HCT116 (cell line): ENCODE measurements at regions of chr22 and their contacts with region 1.

Region 1: DNA sequence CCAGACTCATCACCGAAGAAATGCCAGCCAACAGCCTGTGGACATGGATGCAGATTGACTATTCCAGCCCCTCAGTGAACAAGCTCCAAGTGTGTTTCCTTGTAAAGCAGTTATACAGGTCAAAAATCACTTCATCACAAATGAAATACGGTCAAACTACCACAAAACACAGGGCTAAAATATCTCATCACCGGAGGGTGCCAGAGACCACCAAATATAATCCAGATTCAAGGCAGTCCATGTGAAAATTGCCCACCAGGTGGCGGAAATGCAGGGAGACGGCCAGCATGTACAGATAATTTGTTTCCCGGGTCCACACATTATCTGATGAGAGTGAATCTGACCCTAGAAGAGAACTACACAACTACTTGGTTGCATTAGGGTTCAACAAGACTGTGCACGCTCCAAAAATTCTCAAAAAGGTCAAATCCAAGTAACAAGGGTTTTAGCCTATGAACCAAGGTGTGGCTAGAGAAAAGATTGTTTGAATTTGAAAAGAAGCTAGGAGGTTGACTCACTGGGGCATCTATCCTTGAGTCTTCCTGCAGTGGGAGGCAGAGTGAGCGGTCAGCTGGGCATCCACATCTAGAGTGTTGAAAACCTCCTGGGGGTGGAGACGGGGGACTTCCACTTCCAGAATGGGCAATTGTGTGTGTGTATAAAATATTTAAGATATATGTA is 71.7 kb downstream of the IGLL5 start:
- DNase-seq: peak; percentile 80
- ATAC-seq: peak; percentile 73
- H3K4me3 ChIP-seq: no peak overlapping the region
- H3K27ac ChIP-seq: no peak overlapping the region
- H3K4me1 ChIP-seq: no peaks in the 10 kb centered on the region
- H3K27me3 ChIP-seq: no peaks in the 10 kb centered on the region
- CTCF ChIP-seq: peak; percentile 85 to 100 (median 99)
- POLR2A ChIP-seq: no peak
- RAD21 ChIP-seq: peak; percentile 98

Region 2: GRCh38 chr22:22463855-22464540 is 495.3 kb before region 1 on chr22:
- CTCF ChIA-PET with region 1: interaction called, 20 read pairs
- POLR2A ChIA-PET with region 1: no interaction called
- RAD21 ChIA-PET with region 1: no interaction called
- intact Hi-C with region 1: loop called (anchors 1 kb)
- DNase-seq: peak; percentile 51
- ATAC-seq: peak; percentile 92
- H3K4me3 ChIP-seq: peak overlapping the region in 1 of 2 experiments; percentile 8; a peak in 1 of 4 replicates
- H3K27ac ChIP-seq: no peak overlapping the region
- H3K4me1 ChIP-seq: no peaks in the 10 kb centered on the region
- H3K27me3 ChIP-seq: no peaks in the 10 kb centered on the region
- CTCF ChIP-seq: peak; percentile 53 to 81 (median 59); a peak in 4 of 6 replicates
- POLR2A ChIP-seq: no peak
- RAD21 ChIP-seq: peak; percentile 78

Region 3: DNA sequence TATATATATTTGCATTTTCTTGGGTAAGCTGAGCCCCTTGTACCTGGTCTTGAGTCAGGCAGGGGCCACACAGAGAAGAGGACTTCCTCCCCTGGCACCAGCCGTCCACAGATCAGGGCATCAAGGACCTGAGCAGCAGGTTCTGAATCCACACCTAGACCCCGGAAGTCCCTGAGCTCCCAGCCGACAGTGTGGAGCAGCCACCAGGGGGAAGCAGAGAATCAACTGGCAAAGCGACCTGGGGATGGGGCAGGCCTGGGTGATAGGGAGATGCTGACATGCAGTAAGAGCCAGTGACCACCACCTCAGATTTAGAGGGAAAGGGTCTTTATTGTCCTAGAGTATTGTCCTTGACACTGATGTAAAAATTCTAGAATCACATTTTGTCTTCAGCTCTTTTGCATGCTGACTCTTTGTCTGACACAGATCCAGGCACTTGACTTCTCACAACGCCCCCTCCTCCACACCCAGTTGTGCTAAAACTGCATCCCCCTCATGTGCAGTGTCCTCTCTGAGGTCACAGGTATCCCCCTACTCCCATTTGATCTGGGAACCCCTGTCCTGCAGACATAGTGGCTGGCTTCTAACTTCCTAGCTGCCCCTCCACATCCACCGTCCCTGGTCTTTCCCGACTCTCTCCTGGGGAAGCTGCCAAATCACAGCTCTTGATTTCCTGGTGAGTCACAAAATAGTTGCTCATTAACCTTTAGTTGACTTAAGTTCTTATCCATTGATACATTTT is 205.6 kb before region 1 on chr22:
- CTCF ChIA-PET with region 1: interaction called, 18 read pairs
- POLR2A ChIA-PET with region 1: no interaction called
- RAD21 ChIA-PET with region 1: no interaction called
- intact Hi-C with region 1: no loop called
- DNase-seq: peak; percentile 47
- ATAC-seq: peak; percentile 99
- H3K4me3 ChIP-seq: no peak overlapping the region
- H3K27ac ChIP-seq: no peak overlapping the region
- H3K4me1 ChIP-seq: peaks cover 0 to 4% of the 10 kb centered on the region in 2 experiments; a peak in 1 of 4 replicates
- H3K27me3 ChIP-seq: no peaks in the 10 kb centered on the region
- CTCF ChIP-seq: peak; percentile 59 to 93 (median 81)
- POLR2A ChIP-seq: no peak
- RAD21 ChIP-seq: peak; percentile 53

Region 4: DNA sequence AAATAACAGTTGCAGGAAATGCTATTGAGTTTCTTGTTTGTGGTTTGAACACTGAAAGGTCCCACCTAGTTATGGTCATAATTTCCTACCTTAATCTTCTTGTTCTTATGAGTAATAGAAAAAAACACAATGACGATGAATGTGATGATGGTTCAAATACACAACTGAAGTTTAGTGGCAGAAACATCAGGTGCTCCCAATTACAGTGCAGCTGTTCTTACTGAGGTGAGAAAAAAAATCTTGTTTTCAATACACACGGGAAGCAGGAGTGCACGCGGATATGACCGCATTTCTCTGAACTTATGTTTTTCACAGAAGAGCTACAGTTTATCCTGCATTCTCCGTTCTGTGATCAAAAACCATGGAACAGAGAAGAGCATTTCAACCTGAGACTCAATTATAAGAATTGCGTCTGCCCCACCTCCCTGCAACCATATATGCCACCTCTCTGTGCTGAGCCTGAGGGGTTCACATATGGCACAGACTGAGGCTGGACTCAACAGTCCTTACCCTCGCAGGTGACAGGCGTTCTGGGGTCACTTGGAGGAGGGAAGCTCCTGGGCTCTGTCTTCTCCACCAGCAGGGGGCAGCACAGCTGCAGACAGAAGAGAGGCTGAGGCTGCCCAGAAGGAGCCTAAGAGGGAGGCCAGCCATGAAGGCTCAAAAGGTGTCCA is 171.4 kb before region 1 on chr22:
- CTCF ChIA-PET with region 1: interaction called, 29 read pairs
- POLR2A ChIA-PET with region 1: no interaction called
- RAD21 ChIA-PET with region 1: no interaction called
- intact Hi-C with region 1: loop called (anchors 10 kb)
- DNase-seq: peak; percentile 44
- ATAC-seq: peak; percentile 97
- H3K4me3 ChIP-seq: no peak overlapping the region
- H3K27ac ChIP-seq: no peak overlapping the region
- H3K4me1 ChIP-seq: no peaks in the 10 kb centered on the region
- H3K27me3 ChIP-seq: peaks cover 5% of the 10 kb centered on the region; the same call in 1 of the 2 replicates
- CTCF ChIP-seq: peak; percentile 50 to 97 (median 95); a peak in 5 of 6 replicates
- POLR2A ChIP-seq: no peak
- RAD21 ChIP-seq: peak; percentile 54; the same call in 1 of the 2 replicates

Region 5: GRCh38 chr22:22848364-22848866 is 110.9 kb before region 1 on chr22:
- CTCF ChIA-PET with region 1: interaction called, 9 read pairs
- POLR2A ChIA-PET with region 1: no interaction called
- RAD21 ChIA-PET with region 1: interaction called in 1 of 2 experiments, 7 read pairs
- intact Hi-C with region 1: loop called (anchors 2 kb)
- DNase-seq: peak; percentile 56
- ATAC-seq: peak; percentile 100
- H3K4me3 ChIP-seq: no peak overlapping the region
- H3K27ac ChIP-seq: no peak overlapping the region
- H3K4me1 ChIP-seq: no peaks in the 10 kb centered on the region
- H3K27me3 ChIP-seq: peaks cover 15% of the 10 kb centered on the region
- CTCF ChIP-seq: peak; percentile 62 to 98 (median 97); a peak in 5 of 6 replicates
- POLR2A ChIP-seq: no peak
- RAD21 ChIP-seq: peak; percentile 64

Region 6: DNA sequence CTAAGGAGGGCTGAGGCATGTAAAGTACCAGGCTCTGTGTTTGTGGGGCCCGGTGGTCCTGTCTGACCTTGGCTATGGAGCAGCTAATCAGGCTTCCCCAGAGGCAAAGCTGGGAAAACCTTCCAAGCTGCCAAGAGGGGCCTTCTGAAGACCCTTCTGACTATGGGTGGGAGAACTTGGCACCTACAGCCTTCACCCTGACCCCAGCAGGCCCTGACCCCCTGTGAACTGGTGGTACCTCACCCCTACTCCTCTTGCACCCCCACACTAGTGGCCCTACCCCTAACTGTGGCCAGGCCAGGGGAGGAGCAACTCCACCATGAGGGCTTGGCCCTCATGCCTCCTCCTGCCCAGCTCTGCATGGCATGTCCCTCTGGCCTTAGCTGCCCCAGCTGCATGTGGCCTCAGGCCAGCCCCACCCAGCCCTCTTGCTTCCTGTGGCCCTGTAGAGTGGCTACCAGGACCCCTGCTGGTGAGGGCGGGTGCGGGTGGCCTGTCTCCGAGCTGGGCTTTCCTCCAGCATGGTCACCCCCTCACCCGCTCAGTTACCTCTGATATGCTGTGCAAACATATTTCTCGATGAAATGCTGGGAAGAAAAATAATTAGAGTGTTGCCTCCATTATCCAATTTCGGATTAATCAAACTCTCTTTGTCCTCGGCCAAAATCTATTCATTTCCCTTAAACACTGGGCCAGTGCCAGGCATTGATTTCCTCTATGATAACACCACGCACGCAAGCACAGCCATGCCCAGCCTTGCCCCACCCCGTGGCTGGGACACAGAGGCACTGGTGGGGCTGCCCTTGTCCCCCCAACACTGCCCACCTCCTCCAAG is 118.6 kb after region 1 on chr22:
- CTCF ChIA-PET with region 1: no interaction called
- POLR2A ChIA-PET with region 1: no interaction called
- RAD21 ChIA-PET with region 1: no interaction called
- intact Hi-C with region 1: no loop called
- DNase-seq: no peak
- ATAC-seq: peak; percentile 82
- H3K4me3 ChIP-seq: peak overlapping the region in 1 of 2 experiments; percentile 18; a peak in 1 of 4 replicates
- H3K27ac ChIP-seq: peak overlapping the region; percentile 59; the same call in 1 of the 2 replicates
- H3K4me1 ChIP-seq: peaks cover 29 to 51% of the 10 kb centered on the region in 2 experiments
- H3K27me3 ChIP-seq: no peaks in the 10 kb centered on the region
- CTCF ChIP-seq: peak in 1 of 3 experiments; percentile 25; a peak in 3 of 6 replicates
- POLR2A ChIP-seq: no peak
- RAD21 ChIP-seq: no peak; the same call in 1 of the 2 replicates

Region 7: GRCh38 chr22:23144932-23145873 is 185.9 kb after region 1 on chr22 and contains the start of gene RAB36:
- CTCF ChIA-PET with region 1: interaction called, 10 read pairs
- POLR2A ChIA-PET with region 1: no interaction called
- RAD21 ChIA-PET with region 1: no interaction called
- intact Hi-C with region 1: no loop called
- DNase-seq: peak; percentile 99
- ATAC-seq: peak; percentile 92
- H3K4me3 ChIP-seq: peak within 1 kb of the TSS; percentile 76
- H3K27ac ChIP-seq: peak within 1 kb of the TSS; percentile 17
- H3K4me1 ChIP-seq: peaks cover 14 to 36% of the 10 kb centered on the region in 2 experiments
- H3K27me3 ChIP-seq: no peaks in the 10 kb centered on the region
- CTCF ChIP-seq: no peak
- POLR2A ChIP-seq: no peak
- RAD21 ChIP-seq: no peak
- total RNA-seq, gene RAB36: 6.1 TPM

Region 8: GRCh38 chr22:23180301-23180892 is 221.1 kb after region 1 on chr22 and contains the start of gene BCR:
- CTCF ChIA-PET with region 1: no interaction called
- POLR2A ChIA-PET with region 1: no interaction called
- RAD21 ChIA-PET with region 1: no interaction called
- intact Hi-C with region 1: no loop called
- DNase-seq: peak; percentile 34
- ATAC-seq: peak; percentile 88
- H3K4me3 ChIP-seq: peak within 1 kb of the TSS; percentile 69 to 81
- H3K27ac ChIP-seq: peak within 1 kb of the TSS; percentile 83
- H3K4me1 ChIP-seq: peaks cover 34 to 44% of the 10 kb centered on the region in 2 experiments
- H3K27me3 ChIP-seq: no peaks in the 10 kb centered on the region
- CTCF ChIP-seq: no peak
- POLR2A ChIP-seq: peak; percentile 33
- RAD21 ChIP-seq: no peak
- total RNA-seq, gene BCR: 39.7 TPM

Region 9: DNA sequence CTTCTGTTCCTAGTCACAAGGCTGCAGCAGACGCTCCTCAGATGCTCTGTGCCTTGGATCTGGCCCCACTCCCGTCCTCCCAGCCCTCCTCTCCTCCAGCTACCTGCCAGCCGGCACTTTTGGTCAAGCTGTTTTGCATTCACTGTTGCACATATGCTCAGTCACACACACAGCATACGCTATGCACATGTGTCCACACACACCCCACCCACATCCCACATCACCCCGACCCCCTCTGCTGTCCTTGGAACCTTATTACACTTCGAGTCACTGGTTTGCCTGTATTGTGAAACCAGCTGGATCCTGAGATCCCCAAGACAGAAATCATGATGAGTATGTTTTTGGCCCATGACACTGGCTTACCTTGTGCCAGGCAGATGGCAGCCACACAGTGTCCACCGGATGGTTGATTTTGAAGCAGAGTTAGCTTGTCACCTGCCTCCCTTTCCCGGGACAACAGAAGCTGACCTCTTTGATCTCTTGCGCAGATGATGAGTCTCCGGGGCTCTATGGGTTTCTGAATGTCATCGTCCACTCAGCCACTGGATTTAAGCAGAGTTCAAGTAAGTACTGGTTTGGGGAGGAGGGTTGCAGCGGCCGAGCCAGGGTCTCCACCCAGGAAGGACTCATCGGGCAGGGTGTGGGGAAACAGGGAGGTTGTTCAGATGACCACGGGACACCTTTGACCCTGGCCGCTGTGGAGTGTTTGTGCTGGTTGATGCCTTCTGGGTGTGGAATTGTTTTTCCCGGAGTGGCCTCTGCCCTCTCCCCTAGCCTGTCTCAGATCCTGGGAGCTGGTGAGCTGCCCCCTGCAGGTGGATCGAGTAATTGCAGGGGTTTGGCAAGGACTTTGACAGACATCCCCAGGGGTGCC is 330.8 kb after region 1 on chr22:
- CTCF ChIA-PET with region 1: interaction called, 6 read pairs
- POLR2A ChIA-PET with region 1: no interaction called
- RAD21 ChIA-PET with region 1: no interaction called
- intact Hi-C with region 1: loop called (anchors 1 kb)
- DNase-seq: no peak
- ATAC-seq: peak; percentile 89
- H3K4me3 ChIP-seq: no peak overlapping the region
- H3K27ac ChIP-seq: no peak overlapping the region
- H3K4me1 ChIP-seq: no peaks in the 10 kb centered on the region
- H3K27me3 ChIP-seq: no peaks in the 10 kb centered on the region
- CTCF ChIP-seq: peak; percentile 39 to 95 (median 78); a peak in 5 of 6 replicates
- POLR2A ChIP-seq: no peak
- RAD21 ChIP-seq: 0 out of 2 replicates have a peak, but pooled peaks have one; percentile 19